Mammary epithelial cell (primary cell): ENCODE measurements at regions of chr9 and their contacts with region 1.

Region 1: DNA sequence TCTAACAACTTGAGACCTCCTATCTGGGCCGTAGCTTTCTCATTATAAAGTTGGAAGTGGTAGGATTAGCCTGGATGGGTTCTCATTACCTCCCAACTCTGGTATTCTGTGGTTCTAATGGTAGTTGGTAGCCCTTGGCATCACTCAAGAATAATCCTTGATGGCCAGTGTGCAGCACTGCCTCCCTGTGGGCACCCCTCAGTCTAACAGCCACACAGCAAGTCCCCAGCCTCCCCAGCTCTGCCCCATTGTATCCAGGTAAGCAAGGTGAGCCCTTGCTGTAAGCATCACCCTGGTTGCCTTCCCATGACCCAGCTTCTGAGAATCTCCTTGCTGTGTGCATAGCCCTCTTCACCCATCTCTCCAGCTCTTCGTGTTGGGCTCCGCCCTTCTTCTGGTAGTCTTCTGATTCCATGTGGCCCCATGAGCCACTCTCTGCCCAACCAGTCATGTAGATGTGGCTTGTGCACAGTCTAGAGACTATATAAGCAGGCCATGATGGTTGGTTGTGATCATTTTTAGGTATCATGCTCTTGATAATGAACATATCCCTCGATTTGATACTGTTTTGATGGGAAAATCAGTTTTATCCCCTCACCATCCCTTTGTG is 57.6 kb upstream of the GRHPR start:
- DNase-seq: no peak
- H3K4me3 ChIP-seq: no peak overlapping the region
- H3K27ac ChIP-seq: no peak overlapping the region
- H3K4me1 ChIP-seq: no peaks in the 10 kb centered on the region
- H3K27me3 ChIP-seq: no peaks in the 10 kb centered on the region
- CTCF ChIP-seq: peak; percentile 30 to 37

Region 2: GRCh38 chr9:37302277-37302676 is 62.6 kb before region 1 on chr9:
- CTCF ChIA-PET with region 1: no interaction called
- dilution Hi-C with region 1: loop called (anchors 5 kb)
- in situ Hi-C with region 1: no loop called
- intact Hi-C with region 1: no loop called
- DNase-seq: no peak
- H3K4me3 ChIP-seq: no peak overlapping the region
- H3K27ac ChIP-seq: no peak overlapping the region
- H3K4me1 ChIP-seq: peaks cover 4% of the 10 kb centered on the region
- H3K27me3 ChIP-seq: no peaks in the 10 kb centered on the region
- CTCF ChIP-seq: no peak

Region 3: DNA sequence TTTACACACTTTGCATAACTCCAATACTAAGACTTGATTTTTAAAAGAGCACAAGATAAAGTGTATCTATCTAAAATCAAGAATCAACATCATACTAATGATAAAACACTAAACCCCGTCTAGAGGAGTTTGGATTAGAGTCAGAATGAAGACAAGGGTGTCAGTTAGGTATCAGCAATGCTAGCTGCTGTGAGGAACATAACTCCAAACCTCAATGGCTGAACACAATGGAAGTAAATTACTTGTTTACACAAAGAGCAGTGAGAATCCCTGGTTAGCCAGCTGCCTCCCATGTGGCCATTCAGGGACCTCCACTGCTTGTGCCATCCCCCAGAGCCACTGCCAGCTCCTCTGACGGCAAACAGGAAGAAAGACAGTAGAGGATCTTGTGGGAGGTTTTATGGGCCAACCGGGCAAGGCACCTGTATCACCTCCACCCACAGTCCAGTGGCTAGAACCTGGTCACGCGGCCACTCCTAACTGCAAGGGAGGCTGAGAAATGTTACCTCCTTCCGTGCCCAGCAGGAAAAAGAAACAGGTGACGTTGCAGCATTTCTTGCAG is 33.7 kb after region 1 on chr9:
- CTCF ChIA-PET with region 1: no interaction called
- dilution Hi-C with region 1: loop called (anchors 5 kb)
- in situ Hi-C with region 1: no loop called
- intact Hi-C with region 1: no loop called
- DNase-seq: no peak
- H3K4me3 ChIP-seq: no peak overlapping the region
- H3K27ac ChIP-seq: no peak overlapping the region
- H3K4me1 ChIP-seq: no peaks in the 10 kb centered on the region
- H3K27me3 ChIP-seq: no peaks in the 10 kb centered on the region
- CTCF ChIP-seq: no peak